ENCODE measurements at regions of chr19 and their contacts with region 1.

Region 1: DNA sequence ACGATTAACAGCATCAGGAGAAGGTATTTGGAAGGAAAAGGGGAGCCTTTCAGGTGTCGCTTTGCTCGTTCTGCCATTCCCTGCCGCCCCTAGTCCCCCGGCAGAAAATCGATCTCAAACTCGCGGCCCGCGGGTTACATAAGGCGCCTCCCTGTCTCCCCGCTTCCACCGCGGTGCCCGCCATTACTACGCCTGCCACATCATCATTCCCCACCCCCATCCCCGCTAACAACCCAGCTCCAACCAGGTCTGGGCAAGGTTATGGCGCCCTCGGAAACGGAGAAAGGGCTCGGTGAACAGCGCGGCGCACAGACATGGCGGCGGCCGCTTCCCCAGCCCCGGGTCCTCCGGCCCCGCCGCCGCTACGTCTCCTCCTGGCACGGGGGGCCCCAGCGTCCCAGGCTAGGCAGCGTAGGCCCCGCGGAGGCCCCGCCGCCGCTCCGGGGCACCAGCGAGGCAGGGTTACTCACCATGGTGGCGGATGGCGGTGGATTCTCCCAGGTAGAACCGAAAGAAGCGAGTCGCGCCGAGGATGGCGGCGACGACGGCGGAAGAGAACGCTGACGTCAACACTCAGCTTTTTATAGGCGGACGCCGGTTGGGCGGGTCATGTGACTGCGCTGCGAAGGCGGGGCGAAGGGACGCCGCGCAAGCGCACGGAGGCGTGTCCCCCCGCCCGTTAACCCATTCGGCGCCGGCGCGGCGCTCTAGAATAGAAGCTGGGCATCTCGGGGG is at the start of gene EEF2:
- DNase-seq: peak; percentile 90
- H3K4me3 Mint-ChIP-seq: peak within 1 kb of the TSS; percentile 95
- H3K27ac Mint-ChIP-seq: peak within 1 kb of the TSS; percentile 90
- H3K4me1 Mint-ChIP-seq: peaks cover 29% of the 10 kb centered on the region
- H3K27me3 Mint-ChIP-seq: no peaks in the 10 kb centered on the region
- CTCF ChIP-seq: no peak
- total RNA-seq, gene EEF2: 2,296 and 3,126 TPM in 2 replicates

Region 2: DNA sequence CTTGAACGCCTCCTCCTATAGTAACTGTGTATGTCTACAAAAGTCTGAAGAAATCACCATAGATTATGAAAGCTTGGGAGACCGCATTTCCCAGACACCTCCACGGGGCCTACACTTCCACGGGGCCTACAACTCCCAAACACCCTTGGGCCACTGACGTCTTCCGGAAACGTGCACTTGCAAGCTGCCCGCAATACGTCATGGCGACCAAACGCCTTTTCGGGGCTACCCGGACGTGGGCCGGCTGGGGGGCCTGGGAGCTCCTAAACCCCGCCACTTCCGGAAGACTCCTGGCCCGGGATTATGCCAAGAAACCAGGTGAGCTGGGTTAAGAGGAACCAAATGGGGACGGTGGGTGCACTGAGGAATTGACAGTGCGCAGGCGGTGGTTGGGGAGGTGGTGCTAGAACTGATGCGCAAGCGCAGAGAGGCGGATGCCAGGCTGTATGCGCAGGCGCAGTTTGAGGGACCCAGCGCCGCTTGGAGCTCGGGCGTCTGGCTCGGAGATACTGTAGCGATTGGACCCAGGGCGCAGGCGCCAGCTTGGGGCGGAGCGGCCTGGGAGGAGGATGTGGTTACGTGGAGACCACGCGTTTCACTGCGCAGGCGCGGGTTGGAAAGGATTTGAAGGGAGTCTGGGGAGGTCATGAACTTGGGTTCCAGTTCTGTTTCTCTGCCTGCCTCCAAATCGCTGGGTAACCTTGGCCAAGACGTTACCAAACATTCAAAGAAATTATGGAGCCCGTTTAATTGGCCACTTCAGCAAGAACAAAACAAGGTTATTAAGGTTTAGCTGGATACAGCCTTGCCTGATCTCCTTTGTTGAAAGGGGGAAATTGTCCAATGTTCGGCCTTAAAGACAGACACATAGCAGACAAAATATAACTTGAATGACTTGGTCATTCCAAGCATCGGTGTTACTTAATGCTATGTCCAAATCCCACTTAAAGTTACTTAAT is 222.3 kb before region 1 on chr19 and contains the start of gene MRPL54:
- CTCF ChIA-PET with region 1: interaction called, 11 read pairs
- POLR2A ChIA-PET with region 1: interaction called, 18 read pairs
- intact Hi-C with region 1: no loop called
- DNase-seq: peak; percentile 100
- H3K4me3 Mint-ChIP-seq: peak within 1 kb of the TSS; percentile 92
- H3K27ac Mint-ChIP-seq: peak within 1 kb of the TSS; percentile 98
- H3K4me1 Mint-ChIP-seq: peaks cover 6% of the 10 kb centered on the region
- H3K27me3 Mint-ChIP-seq: no peaks in the 10 kb centered on the region
- CTCF ChIP-seq: no peak
- total RNA-seq, gene MRPL54: 85.0 and 85.7 TPM in 2 replicates

Region 3: GRCh38 chr19:3970808-3971598 is 14.1 kb before region 1 on chr19 and contains the start of gene DAPK3:
- CTCF ChIA-PET with region 1: interaction called, 15 read pairs
- POLR2A ChIA-PET with region 1: interaction called, 245 read pairs
- intact Hi-C with region 1: loop called (anchors 2 kb)
- DNase-seq: peak; percentile 99
- H3K4me3 Mint-ChIP-seq: peak within 1 kb of the TSS; percentile 72
- H3K27ac Mint-ChIP-seq: peak within 1 kb of the TSS; percentile 88
- H3K4me1 Mint-ChIP-seq: peaks cover 18% of the 10 kb centered on the region
- H3K27me3 Mint-ChIP-seq: no peaks in the 10 kb centered on the region
- CTCF ChIP-seq: no peak
- total RNA-seq, gene DAPK3: 60.9 and 61.2 TPM in 2 replicates

Region 4: GRCh38 chr19:4058034-4058692 is 73.1 kb after region 1 on chr19:
- CTCF ChIA-PET with region 1: interaction called, 4 read pairs
- POLR2A ChIA-PET with region 1: interaction called, 20 read pairs
- intact Hi-C with region 1: loop called (anchors 5 kb)
- DNase-seq: peak; percentile 96
- H3K4me3 Mint-ChIP-seq: peak overlapping the region; percentile 68
- H3K27ac Mint-ChIP-seq: peak overlapping the region; percentile 70
- H3K4me1 Mint-ChIP-seq: peaks cover 18% of the 10 kb centered on the region
- H3K27me3 Mint-ChIP-seq: no peaks in the 10 kb centered on the region
- CTCF ChIP-seq: peak; percentile 21

Region 5: DNA sequence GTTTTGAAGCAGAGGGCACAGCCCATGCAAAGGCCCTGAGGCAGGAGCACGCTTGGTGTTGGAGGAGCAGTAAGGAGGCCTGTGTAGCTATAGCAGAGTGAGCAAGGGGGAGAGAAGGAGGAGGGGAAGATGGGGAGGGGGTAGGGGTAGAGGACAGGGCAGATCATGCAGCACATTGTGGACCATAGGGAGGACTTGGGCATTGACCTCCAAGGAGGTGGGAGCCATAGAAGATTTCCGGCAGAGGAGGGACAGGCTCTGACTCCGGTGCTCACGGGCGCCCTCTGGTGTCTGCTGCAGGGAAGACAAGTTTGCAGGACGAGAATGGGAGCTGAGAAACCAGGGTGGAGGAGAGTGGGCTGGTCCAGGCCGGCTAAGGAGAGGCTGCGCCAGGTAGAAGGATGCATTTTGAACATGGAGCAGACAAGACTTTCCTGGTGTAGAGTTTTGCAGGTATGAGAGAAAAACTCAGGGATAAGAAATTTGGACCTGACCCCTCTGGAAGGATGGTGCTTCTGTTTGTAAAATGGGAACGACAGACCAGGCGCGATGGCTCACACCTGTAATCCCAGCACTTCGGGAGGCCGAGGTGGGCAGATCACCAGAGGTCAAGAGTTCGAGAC is 154.7 kb after region 1 on chr19:
- CTCF ChIA-PET with region 1: interaction called, 5 read pairs
- POLR2A ChIA-PET with region 1: interaction called, 5 read pairs
- intact Hi-C with region 1: loop called (anchors 2 kb)
- DNase-seq: peak; percentile 78
- H3K4me3 Mint-ChIP-seq: no peak overlapping the region
- H3K27ac Mint-ChIP-seq: no peak overlapping the region
- H3K4me1 Mint-ChIP-seq: no peaks in the 10 kb centered on the region
- H3K27me3 Mint-ChIP-seq: no peaks in the 10 kb centered on the region
- CTCF ChIP-seq: peak; percentile 73

Region 6: GRCh38 chr19:4199699-4200293 is 214.7 kb after region 1 on chr19:
- CTCF ChIA-PET with region 1: interaction called, 6 read pairs
- POLR2A ChIA-PET with region 1: interaction called, 14 read pairs
- intact Hi-C with region 1: loop called (anchors 1 kb)
- DNase-seq: no peak
- H3K4me3 Mint-ChIP-seq: no peak overlapping the region
- H3K27ac Mint-ChIP-seq: no peak overlapping the region
- H3K4me1 Mint-ChIP-seq: peaks cover 16% of the 10 kb centered on the region
- H3K27me3 Mint-ChIP-seq: peaks cover 53% of the 10 kb centered on the region
- CTCF ChIP-seq: no peak

Measured in MCF 10A (cell line).